Psoas muscle (tissue), 8 donors: ENCODE measurements at regions of chr3 and their contacts with region 1.

Region 1: DNA sequence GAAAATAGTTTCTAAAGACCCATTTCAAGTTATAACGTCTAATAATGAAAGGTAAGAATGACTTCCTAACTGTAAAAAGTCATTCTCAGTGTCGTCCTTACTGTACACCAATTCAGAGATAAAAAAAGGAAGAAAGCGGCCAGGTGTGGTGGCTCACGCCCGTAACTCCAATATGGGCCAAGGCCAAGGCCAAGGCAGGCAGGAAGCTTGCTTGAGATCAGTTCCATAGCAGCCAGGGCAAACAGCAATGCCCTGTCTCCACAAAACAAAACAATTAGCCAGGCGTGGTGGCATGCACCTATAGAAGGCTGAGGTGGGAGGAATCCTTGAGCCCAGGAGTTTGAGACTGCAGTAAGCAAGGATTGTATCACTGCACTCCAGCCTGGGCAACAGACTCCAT is 31.9 kb downstream of the UBXN7 start:
- DNase-seq: no peak
- ATAC-seq: no peak
- H3K4me3 ChIP-seq: no peak overlapping the region
- H3K27ac ChIP-seq: no peak overlapping the region
- H3K4me1 ChIP-seq: no peaks in the 10 kb centered on the region
- H3K27me3 ChIP-seq: no peaks in the 10 kb centered on the region
- CTCF ChIP-seq: no peak

Region 2: DNA sequence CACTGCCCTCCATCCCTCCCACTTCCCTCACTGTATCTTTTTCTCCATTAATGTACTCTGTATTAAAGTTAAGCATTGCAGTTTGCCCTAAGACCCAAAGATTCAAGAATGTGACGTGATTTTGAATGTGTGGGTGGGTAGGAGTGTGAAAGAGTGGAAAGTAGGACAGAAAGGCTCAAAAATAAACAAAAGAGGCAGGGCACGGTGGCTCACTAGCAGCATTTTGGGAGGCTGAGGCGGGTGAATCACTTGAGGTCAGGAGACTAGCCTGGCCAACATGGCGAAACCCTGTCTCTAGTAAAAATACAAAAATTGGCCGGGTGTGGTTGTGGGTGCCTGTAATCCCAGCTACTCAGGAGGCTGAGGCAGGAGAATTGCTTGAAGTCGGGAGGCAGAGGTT is 336.9 kb before region 1 on chr3:
- intact Hi-C with region 1: loop called in 1 of 2 experiments (anchors 5 kb)
- DNase-seq: no peak
- ATAC-seq: no peak
- H3K4me3 ChIP-seq: no peak overlapping the region
- H3K27ac ChIP-seq: no peak overlapping the region
- H3K4me1 ChIP-seq: no peaks in the 10 kb centered on the region
- H3K27me3 ChIP-seq: no peaks in the 10 kb centered on the region
- CTCF ChIP-seq: no peak